K562 (cell line): ENCODE measurements at regions of chr15 and their contacts with region 1.

Region 1: DNA sequence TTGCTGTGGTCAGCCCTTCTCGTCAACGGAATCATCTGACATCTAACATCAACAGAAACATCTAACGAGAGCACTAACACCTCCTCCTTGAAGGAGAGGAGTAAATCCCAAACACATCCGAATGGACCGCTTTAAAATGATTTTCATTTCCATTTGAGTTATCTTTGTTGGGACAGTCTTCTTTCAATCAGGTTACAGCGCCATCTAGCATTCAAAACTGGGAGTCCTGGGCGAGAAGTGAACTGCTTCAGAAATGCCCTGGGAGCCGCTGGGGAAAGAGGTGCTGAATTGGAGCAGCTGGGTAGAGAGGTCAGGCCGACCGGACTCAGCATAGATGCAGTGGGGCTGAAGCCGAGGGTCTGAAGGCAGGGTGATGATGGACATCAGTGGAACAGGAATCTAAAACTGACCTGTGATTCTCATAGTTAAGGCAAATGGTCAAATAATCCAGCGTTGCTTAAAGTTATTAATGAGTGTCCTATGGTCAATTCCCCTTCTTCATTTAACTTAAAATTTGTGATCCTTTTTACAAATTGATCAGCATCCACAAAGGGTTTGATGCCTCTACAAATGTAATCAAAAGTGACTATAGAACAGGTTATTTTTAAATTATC is 170.0 kb upstream of the NDN start:
- DNase-seq: peak; percentile 11 to 52 (median 16)
- ATAC-seq: peak; percentile 81
- H3K4me3 ChIP-seq: no peak overlapping the region
- H3K27ac ChIP-seq: no peak overlapping the region
- H3K4me1 ChIP-seq: no peaks in the 10 kb centered on the region
- H3K27me3 ChIP-seq: no peaks in the 10 kb centered on the region; a peak in 1 of 5 replicates
- CTCF ChIP-seq: peak; percentile 47 to 62 (median 52); a peak in 5 of 6 replicates
- EP300 ChIP-seq: no peak
- POLR2A ChIP-seq: no peak
- RAD21 ChIP-seq: peak; percentile 31 to 40; a peak in 3 of 4 replicates

Region 2: GRCh38 chr15:23069496-23070166 is 787.5 kb before region 1 on chr15:
- CTCF ChIA-PET with region 1: no interaction called
- POLR2A ChIA-PET with region 1: no interaction called
- in situ Hi-C with region 1: no loop called
- intact Hi-C with region 1: no loop called
- DNase-seq: peak; percentile 43 to 52 (median 50)
- ATAC-seq: peak; percentile 91
- H3K4me3 ChIP-seq: no peak overlapping the region
- H3K27ac ChIP-seq: no peak overlapping the region
- H3K4me1 ChIP-seq: peaks cover 0 to 9% of the 10 kb centered on the region in 2 experiments; a peak in 2 of 5 replicates
- H3K27me3 ChIP-seq: peaks cover 12 to 15% of the 10 kb centered on the region in 2 experiments; a peak in 4 of 5 replicates
- CTCF ChIP-seq: peak; percentile 19 to 48 (median 39); a peak in 3 of 6 replicates
- EP300 ChIP-seq: no peak
- POLR2A ChIP-seq: no peak
- RAD21 ChIP-seq: no peak

Region 3: GRCh38 chr15:23823508-23823907 is 33.6 kb before region 1 on chr15:
- CTCF ChIA-PET with region 1: interaction called, 4 read pairs
- POLR2A ChIA-PET with region 1: no interaction called
- in situ Hi-C with region 1: no loop called
- intact Hi-C with region 1: loop called (anchors 5 kb)
- DNase-seq: peak in 2 of 4 experiments; percentile 20 to 49
- ATAC-seq: peak; percentile 90
- H3K4me3 ChIP-seq: no peak overlapping the region
- H3K27ac ChIP-seq: no peak overlapping the region
- H3K4me1 ChIP-seq: no peaks in the 10 kb centered on the region
- H3K27me3 ChIP-seq: no peaks in the 10 kb centered on the region
- CTCF ChIP-seq: peak; percentile 48 to 59 (median 48); a peak in 5 of 6 replicates
- EP300 ChIP-seq: no peak
- POLR2A ChIP-seq: no peak
- RAD21 ChIP-seq: peak in 1 of 2 experiments; percentile 31; a peak in 2 of 4 replicates